ENCODE measurements at regions of chr12 and their contacts with region 1.

Region 1: DNA sequence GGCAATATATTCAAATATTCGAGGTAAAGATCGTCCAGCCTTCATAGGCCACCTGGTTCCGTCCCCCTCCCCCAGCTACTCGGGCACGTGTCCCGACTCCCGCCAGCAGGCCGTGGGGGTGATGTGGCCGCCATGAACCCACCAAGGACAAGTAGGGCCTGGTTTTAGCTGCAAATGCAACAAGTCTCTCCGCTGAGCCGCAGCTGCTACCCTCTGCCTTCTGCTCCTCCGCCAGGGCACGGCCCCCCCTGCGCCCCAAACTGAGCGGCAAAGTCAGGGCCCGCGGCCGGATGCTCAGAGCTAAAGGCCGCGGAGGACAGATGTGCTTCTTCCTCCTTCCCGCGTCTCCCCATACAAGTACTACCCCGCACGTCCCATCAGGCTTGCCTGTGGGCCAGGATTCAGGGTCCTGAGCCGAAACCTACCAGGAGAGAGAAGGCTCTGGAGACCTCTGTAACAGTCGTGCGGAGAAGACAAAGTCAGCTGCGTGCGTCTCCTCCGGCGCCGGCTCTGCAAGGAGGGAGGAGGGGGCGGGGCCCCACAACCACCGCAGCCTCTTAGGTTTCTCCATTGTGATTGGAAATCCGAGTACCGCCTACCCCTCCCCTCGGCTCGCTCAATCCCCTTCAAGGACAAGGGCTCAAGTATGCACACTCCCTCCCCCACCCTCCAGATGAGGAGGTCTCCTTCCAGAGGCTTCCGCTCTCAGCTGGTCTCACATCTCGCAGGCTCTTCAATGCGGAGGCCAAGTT is at the start of gene LDHB:
- DNase-seq: peak; percentile 90
- ATAC-seq: peak; percentile 95
- H3K4me3 ChIP-seq: peak within 1 kb of the TSS; percentile 86
- H3K27ac ChIP-seq: peak within 1 kb of the TSS; percentile 30; the same call in 1 of the 2 replicates
- H3K4me1 ChIP-seq: 0 out of 2 replicates have a peak, but pooled peaks cover 5% of the 10 kb centered on the region
- H3K27me3 ChIP-seq: no peaks in the 10 kb centered on the region
- CTCF ChIP-seq: no peak
- total RNA-seq, gene LDHB: 432 and 548 TPM in 2 replicates

Region 2: GRCh38 chr12:21527451-21528180 is 129.9 kb before region 1 on chr12:
- CTCF ChIA-PET with region 1: no interaction called
- POLR2A ChIA-PET with region 1: no interaction called
- intact Hi-C with region 1: loop called (anchors 10 kb)
- DNase-seq: peak; percentile 48
- ATAC-seq: peak; percentile 90
- H3K4me3 ChIP-seq: peak overlapping the region; percentile 79
- H3K27ac ChIP-seq: no peak overlapping the region
- H3K4me1 ChIP-seq: peaks cover 13% of the 10 kb centered on the region; the same call in 1 of the 2 replicates
- H3K27me3 ChIP-seq: peaks cover 5% of the 10 kb centered on the region
- CTCF ChIP-seq: no peak

Region 3: GRCh38 chr12:21566223-21566906 is 91.1 kb before region 1 on chr12:
- CTCF ChIA-PET with region 1: no interaction called
- POLR2A ChIA-PET with region 1: no interaction called
- intact Hi-C with region 1: no loop called
- DNase-seq: no peak
- ATAC-seq: no peak
- H3K4me3 ChIP-seq: no peak overlapping the region
- H3K27ac ChIP-seq: no peak overlapping the region
- H3K4me1 ChIP-seq: no peaks in the 10 kb centered on the region
- H3K27me3 ChIP-seq: no peaks in the 10 kb centered on the region
- CTCF ChIP-seq: no peak